ENCODE measurements at regions of chr21 and their contacts with region 1.

Region 1: DNA sequence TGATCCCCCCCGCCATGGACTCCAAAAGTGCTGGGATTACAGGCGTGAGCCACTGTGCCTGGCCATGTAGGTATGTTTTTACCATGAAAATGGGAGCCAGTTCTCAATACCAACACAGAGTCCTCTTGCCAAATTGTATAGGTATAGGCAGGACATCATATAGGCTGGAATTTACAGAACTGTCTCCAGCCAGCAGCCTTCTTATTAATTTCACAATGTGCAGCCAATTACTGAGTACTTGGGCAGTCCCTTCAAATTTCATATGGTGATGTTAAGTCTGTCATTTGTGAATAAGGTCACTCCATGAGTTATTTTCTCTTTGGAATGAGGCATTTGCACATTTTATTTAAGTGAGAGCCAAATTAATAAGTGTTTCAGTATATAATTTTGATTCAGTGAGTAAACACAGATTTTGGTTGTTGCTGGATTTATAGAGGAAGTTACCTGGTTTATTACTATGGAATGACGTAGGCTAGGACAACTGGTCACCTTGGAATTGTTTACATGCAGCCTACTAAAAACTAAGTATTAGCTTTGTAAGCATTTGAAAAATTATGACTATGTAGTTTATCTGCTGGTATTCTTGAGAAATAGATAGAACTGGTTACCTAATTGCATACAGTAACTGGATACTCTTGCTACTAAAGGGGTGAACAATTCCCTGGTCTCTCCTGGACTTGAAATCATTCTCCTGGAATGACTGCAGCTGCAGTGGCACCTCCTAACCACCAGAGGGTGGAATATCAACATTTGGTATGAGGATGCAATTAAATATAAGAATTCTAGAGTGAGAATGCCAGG is 3.1 kb upstream of the KRTAP27-1 start:
- DNase-seq: peak; percentile 43 to 48
- H3K4me3 ChIP-seq: no peak overlapping the region
- H3K4me3 Mint-ChIP-seq: no peak overlapping the region
- H3K27ac Mint-ChIP-seq: no peak overlapping the region
- H3K4me1 ChIP-seq: no peaks in the 10 kb centered on the region
- H3K4me1 Mint-ChIP-seq: no peaks in the 10 kb centered on the region
- H3K27me3 ChIP-seq: no peaks in the 10 kb centered on the region
- H3K27me3 Mint-ChIP-seq: peaks cover 3% of the 10 kb centered on the region
- CTCF ChIP-seq: peak; percentile 79 to 86

Region 2: GRCh38 chr21:30206551-30207251 is 133.9 kb before region 1 on chr21:
- CTCF ChIA-PET with region 1: no interaction called
- POLR2A ChIA-PET with region 1: no interaction called
- intact Hi-C with region 1: no loop called
- DNase-seq: no peak
- H3K4me3 ChIP-seq: no peak overlapping the region
- H3K4me3 Mint-ChIP-seq: no peak overlapping the region
- H3K27ac Mint-ChIP-seq: no peak overlapping the region
- H3K4me1 ChIP-seq: no peaks in the 10 kb centered on the region
- H3K4me1 Mint-ChIP-seq: no peaks in the 10 kb centered on the region
- H3K27me3 ChIP-seq: no peaks in the 10 kb centered on the region
- H3K27me3 Mint-ChIP-seq: peaks cover 3% of the 10 kb centered on the region
- CTCF ChIP-seq: no peak

Region 3: DNA sequence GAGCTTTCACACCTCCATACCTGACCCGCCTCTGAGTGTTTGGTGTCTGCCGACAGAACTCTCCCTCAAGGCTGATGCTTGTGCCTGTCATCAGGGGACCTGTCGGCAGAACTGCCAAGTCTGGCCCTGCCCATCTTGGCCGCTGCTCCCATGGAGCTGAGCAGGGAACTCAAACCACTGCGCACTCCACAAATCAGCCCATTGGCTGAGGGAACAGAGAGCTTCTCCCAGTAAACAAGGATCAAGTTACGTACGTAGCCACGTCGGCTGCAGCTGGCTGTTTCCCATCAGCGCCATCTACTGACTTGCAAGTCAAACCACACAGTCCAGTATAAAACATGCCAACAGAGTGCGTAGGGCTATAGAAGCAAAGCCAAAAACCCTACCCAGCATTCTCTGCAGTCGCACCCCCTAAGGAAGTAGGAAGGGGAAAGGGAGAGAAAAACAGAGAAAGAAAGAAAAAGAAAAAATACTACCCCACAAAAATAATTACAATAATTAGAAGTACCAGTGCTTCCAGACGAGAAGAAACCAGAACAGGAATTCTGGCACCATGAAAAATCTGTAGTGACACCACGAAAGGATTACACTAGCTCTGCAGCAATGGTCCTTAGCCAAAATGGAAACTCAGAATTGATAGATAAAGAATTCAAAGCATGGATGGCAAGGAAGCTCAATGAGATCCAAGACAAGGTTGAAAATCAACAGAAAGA is 68.3 kb after region 1 on chr21:
- CTCF ChIA-PET with region 1: interaction called, 4 read pairs
- POLR2A ChIA-PET with region 1: no interaction called
- intact Hi-C with region 1: loop called (anchors 1 kb)
- DNase-seq: peak; percentile 74 to 86
- H3K4me3 ChIP-seq: no peak overlapping the region
- H3K4me3 Mint-ChIP-seq: peak overlapping the region; percentile 66
- H3K27ac Mint-ChIP-seq: no peak overlapping the region
- H3K4me1 ChIP-seq: no peaks in the 10 kb centered on the region
- H3K4me1 Mint-ChIP-seq: peaks cover 6% of the 10 kb centered on the region
- H3K27me3 ChIP-seq: no peaks in the 10 kb centered on the region
- H3K27me3 Mint-ChIP-seq: peaks cover 5% of the 10 kb centered on the region
- CTCF ChIP-seq: peak; percentile 60 to 63

Region 4: DNA sequence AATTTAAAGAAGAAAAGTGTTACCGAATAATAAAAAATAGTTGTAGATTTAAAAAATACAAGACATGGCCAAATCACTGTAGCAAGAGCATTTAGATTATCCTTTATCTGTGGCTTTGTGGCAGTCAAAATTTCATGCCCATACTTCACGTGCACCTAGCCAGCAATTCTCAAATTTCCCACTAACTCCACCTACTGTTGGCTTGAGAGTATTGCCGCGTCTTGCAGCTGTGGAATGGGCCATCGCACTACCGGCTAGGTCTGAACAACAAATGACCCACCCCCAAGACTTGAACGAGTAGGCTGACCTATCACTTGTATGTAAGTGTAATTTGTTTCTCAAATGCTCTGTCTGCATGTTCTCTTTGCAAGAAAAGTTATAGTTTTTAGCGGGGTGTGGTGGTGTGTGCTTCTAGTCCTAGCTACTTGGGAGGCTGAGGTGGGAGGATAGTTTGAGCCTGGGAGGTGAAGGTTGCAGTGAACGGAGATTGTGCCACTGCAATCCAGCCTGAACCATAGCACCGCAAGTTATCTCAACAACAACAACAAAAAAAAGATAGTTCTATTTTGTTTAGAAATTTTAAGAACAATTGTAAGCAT is 93.5 kb after region 1 on chr21:
- CTCF ChIA-PET with region 1: interaction called, 3 read pairs
- POLR2A ChIA-PET with region 1: no interaction called
- intact Hi-C with region 1: loop called (anchors 1 kb)
- DNase-seq: peak; percentile 41 to 54
- H3K4me3 ChIP-seq: no peak overlapping the region
- H3K4me3 Mint-ChIP-seq: no peak overlapping the region
- H3K27ac Mint-ChIP-seq: no peak overlapping the region
- H3K4me1 ChIP-seq: 0 out of 2 replicates have a peak, but pooled peaks cover 9% of the 10 kb centered on the region
- H3K4me1 Mint-ChIP-seq: no peaks in the 10 kb centered on the region
- H3K27me3 ChIP-seq: no peaks in the 10 kb centered on the region
- H3K27me3 Mint-ChIP-seq: peaks cover 10% of the 10 kb centered on the region
- CTCF ChIP-seq: peak; percentile 52 to 62

Region 5: GRCh38 chr21:30463713-30464112 is 123.1 kb after region 1 on chr21:
- CTCF ChIA-PET with region 1: interaction called, 4 read pairs
- POLR2A ChIA-PET with region 1: no interaction called
- intact Hi-C with region 1: loop called (anchors 1 kb)
- DNase-seq: peak in 1 of 2 experiments; percentile 14
- H3K4me3 ChIP-seq: no peak overlapping the region
- H3K4me3 Mint-ChIP-seq: no peak overlapping the region
- H3K27ac Mint-ChIP-seq: no peak overlapping the region
- H3K4me1 ChIP-seq: no peaks in the 10 kb centered on the region
- H3K4me1 Mint-ChIP-seq: no peaks in the 10 kb centered on the region
- H3K27me3 ChIP-seq: no peaks in the 10 kb centered on the region
- H3K27me3 Mint-ChIP-seq: peaks cover 3% of the 10 kb centered on the region
- CTCF ChIP-seq: peak; percentile 34 to 62